CD4-positive, alpha-beta T cell (primary cell): ENCODE measurements at regions of chr7 and their contacts with region 1.

Region 1: GRCh38 chr7:131327626-131328376 is at the start of gene MKLN1:
- DNase-seq: peak; percentile 80 to 96 (median 86)
- ATAC-seq: peak; percentile 92
- H3K4me3 ChIP-seq: peak within 1 kb of the TSS; percentile 76
- H3K4me3 Mint-ChIP-seq: peak within 1 kb of the TSS; percentile 93
- H3K27ac ChIP-seq: peak within 1 kb of the TSS; percentile 87 to 92
- H3K27ac Mint-ChIP-seq: peak within 1 kb of the TSS; percentile 97
- H3K4me1 ChIP-seq: peaks cover 27% of the 10 kb centered on the region
- H3K4me1 Mint-ChIP-seq: peaks cover 90% of the 10 kb centered on the region
- H3K27me3 ChIP-seq: no peaks in the 10 kb centered on the region
- H3K27me3 Mint-ChIP-seq: no peaks in the 10 kb centered on the region
- CTCF ChIP-seq: no peak
- total RNA-seq, gene MKLN1: 47.2 to 53.7 TPM

Region 2: DNA sequence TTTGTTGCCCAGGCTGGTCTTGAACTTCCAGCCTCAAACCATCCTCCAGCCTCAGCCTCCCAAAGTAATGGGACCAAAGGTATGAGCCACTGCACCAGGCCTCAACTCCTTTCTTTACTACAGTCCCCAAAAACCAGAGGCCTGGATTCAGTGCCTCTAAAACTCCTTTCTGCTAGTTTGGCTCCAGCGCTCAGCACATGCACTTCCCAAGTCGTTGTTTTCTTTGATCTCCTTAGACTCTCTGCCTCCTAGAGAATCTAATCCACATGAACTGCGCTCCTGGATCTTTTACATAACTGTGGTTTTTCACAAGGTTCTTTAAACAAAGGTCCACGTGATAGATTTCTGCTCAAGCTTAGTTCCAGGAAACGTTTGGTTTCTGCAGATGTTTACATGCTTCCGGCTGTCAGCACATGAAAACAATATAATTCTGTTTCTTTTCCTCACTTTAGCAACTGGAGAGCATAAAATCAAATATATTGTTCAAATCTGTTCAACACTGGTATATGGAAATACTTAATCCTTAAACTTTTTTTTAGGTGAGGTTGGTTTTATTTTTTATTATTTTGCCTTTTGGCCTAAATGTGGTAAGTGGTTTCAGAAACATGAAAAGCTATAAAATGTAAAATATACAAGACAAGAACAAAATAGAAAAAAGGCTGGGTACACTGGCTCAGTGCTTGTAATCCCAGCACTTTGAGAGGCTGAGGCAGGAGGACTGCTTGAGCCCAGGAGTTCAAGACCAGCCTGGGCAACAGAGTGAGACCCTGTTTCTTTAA is 270.6 kb before region 1 on chr7:
- CTCF ChIA-PET with region 1: no interaction called
- POLR2A ChIA-PET with region 1: interaction called, 12 read pairs
- intact Hi-C with region 1: no loop called
- DNase-seq: peak in 3 of 14 experiments; percentile 75 to 88 (median 79)
- ATAC-seq: peak; percentile 54
- H3K4me3 ChIP-seq: peak overlapping the region; percentile 32
- H3K4me3 Mint-ChIP-seq: peak overlapping the region; percentile 88
- H3K27ac ChIP-seq: peak overlapping the region; percentile 72 to 80
- H3K27ac Mint-ChIP-seq: peak overlapping the region; percentile 95
- H3K4me1 ChIP-seq: peaks cover 86% of the 10 kb centered on the region
- H3K4me1 Mint-ChIP-seq: peaks cover 86% of the 10 kb centered on the region
- H3K27me3 ChIP-seq: no peaks in the 10 kb centered on the region
- H3K27me3 Mint-ChIP-seq: no peaks in the 10 kb centered on the region
- CTCF ChIP-seq: no peak

Region 3: GRCh38 chr7:131188367-131189339 is 139.1 kb before region 1 on chr7:
- CTCF ChIA-PET with region 1: no interaction called
- POLR2A ChIA-PET with region 1: interaction called, 3 read pairs
- intact Hi-C with region 1: loop called in 1 of 2 experiments (anchors 10 kb)
- DNase-seq: peak; percentile 16 to 91 (median 40)
- ATAC-seq: peak; percentile 86
- H3K4me3 ChIP-seq: no peak overlapping the region
- H3K4me3 Mint-ChIP-seq: peak overlapping the region; percentile 23
- H3K27ac ChIP-seq: peak overlapping the region in 1 of 2 donors; percentile 74
- H3K27ac Mint-ChIP-seq: peak overlapping the region; percentile 78
- H3K4me1 ChIP-seq: peaks cover 32% of the 10 kb centered on the region
- H3K4me1 Mint-ChIP-seq: peaks cover 28% of the 10 kb centered on the region
- H3K27me3 ChIP-seq: no peaks in the 10 kb centered on the region
- H3K27me3 Mint-ChIP-seq: no peaks in the 10 kb centered on the region
- CTCF ChIP-seq: no peak

Region 4: GRCh38 chr7:131231381-131232220 is 96.2 kb before region 1 on chr7:
- CTCF ChIA-PET with region 1: no interaction called
- POLR2A ChIA-PET with region 1: interaction called, 9 read pairs
- intact Hi-C with region 1: loop called in 1 of 2 experiments (anchors 1 kb)
- DNase-seq: peak; percentile 36 to 85 (median 55)
- ATAC-seq: peak; percentile 76
- H3K4me3 ChIP-seq: peak overlapping the region; percentile 38
- H3K4me3 Mint-ChIP-seq: peak overlapping the region; percentile 69
- H3K27ac ChIP-seq: peak overlapping the region; percentile 59 to 62
- H3K27ac Mint-ChIP-seq: peak overlapping the region; percentile 82
- H3K4me1 ChIP-seq: peaks cover 32% of the 10 kb centered on the region
- H3K4me1 Mint-ChIP-seq: peaks cover 37% of the 10 kb centered on the region
- H3K27me3 ChIP-seq: no peaks in the 10 kb centered on the region
- H3K27me3 Mint-ChIP-seq: no peaks in the 10 kb centered on the region
- CTCF ChIP-seq: no peak

Region 5: DNA sequence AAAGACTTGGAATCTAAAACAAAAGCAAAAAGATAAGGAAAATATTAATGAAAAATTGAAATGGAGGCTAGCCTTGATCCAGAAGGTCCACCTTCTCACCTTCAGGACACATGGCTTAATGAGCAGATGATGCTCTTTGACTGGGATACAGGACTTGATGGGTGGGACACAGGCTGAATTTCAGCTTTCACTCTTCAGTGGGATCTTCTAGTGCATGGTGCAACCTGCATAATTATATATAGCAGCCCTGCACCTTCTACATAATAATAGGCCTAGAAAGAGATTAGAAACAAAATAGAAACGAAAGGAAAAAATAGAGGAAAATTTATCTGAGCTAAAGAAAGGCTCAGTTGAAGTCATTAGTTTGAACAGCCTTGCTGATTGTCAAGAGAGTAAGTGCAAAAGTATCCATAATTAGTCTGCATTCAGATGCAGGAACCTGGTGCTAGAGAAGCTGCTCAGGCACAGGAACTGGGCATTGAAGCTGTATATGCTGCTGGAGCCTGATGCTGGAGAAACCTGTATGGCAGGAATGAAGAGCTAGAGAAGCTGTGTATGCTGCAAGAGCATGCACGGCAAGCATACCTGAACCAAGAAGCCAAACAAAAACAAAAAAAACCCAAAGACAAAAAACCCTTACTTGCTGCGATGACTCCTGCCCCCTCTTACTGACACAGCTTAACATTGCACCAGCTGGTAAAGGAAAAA is 19.2 kb after region 1 on chr7:
- CTCF ChIA-PET with region 1: interaction called, 3 read pairs
- POLR2A ChIA-PET with region 1: interaction called, 13 read pairs
- intact Hi-C with region 1: no loop called
- DNase-seq: no peak
- ATAC-seq: no peak
- H3K4me3 ChIP-seq: no peak overlapping the region
- H3K4me3 Mint-ChIP-seq: no peak overlapping the region
- H3K27ac ChIP-seq: no peak overlapping the region
- H3K27ac Mint-ChIP-seq: peak overlapping the region; percentile 19
- H3K4me1 ChIP-seq: no peaks in the 10 kb centered on the region
- H3K4me1 Mint-ChIP-seq: peaks cover 61% of the 10 kb centered on the region
- H3K27me3 ChIP-seq: no peaks in the 10 kb centered on the region
- H3K27me3 Mint-ChIP-seq: no peaks in the 10 kb centered on the region
- CTCF ChIP-seq: no peak